ENCODE measurements at regions of chr5 and their contacts with region 1.

Region 1: DNA sequence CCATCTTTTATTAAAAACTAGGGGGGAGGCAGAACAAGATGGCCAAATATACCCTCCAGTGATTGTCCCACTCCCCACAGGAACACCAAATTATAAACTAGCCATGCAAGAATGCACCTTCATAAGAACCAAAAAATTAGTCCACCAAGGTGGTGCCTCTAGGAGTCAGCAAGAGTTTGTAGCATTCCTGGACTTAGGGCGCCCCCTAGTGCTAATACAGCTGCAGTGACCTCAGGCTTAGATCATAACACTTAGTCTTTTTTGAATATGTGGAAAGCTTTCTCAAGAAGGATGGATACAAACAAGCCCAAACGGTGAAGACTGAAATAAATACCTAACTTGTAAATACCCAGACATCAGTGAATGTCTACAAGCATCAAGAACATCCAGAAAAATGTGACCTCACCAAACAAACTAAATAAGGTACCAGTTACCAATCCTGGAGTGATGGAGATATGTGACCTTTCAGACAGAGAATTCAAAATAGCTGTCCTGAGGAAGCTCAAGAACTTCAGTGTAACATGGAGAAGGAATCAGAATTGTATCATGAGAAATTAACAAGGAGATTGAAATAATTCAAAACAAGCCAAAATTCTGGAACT is 19.3 kb downstream of the PPIP5K2 start:
- DNase-seq: peak; percentile 60 to 88 (median 83)
- ATAC-seq: peak; percentile 98
- H3K4me3 ChIP-seq: no peak overlapping the region
- H3K4me3 Mint-ChIP-seq: no peak overlapping the region
- H3K27ac ChIP-seq: no peak overlapping the region
- H3K27ac Mint-ChIP-seq: no peak overlapping the region
- H3K4me1 ChIP-seq: no peaks in the 10 kb centered on the region
- H3K4me1 Mint-ChIP-seq: peaks cover 2% of the 10 kb centered on the region
- H3K27me3 ChIP-seq: no peaks in the 10 kb centered on the region
- H3K27me3 Mint-ChIP-seq: no peaks in the 10 kb centered on the region
- CTCF ChIP-seq: peak; percentile 94

Region 2: DNA sequence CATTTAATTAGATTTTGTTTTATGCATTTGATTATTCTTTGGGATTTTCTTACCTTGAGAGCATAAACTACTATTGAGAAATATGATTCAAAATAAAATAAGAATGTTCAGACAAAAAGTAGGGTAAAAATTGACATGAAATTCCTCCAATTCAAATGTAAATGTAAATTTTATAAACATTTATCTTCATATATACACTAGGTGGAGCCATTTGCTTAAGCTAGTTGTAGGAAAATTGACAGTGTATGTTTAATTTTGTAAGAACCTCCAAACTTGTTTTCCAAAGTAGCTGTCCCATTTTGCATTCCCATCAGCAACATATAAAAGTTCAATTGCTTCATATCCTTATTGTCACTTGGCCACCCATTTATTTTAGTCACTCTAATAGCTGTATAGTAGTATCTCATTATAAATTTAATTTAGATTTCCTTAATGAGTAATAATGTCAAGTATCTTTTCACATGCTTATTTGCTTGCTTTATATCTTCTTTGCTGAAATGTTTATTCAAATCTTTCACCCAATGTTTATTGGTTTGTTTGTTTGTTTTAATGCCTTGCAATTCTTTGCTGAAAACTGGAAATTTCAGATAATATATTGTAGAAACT is 602.9 kb before region 1 on chr5:
- CTCF ChIA-PET with region 1: interaction called, 4 read pairs
- POLR2A ChIA-PET with region 1: no interaction called
- intact Hi-C with region 1: loop called (anchors 1 to 2 kb)
- DNase-seq: peak in 2 of 9 experiments; percentile 1 to 14
- ATAC-seq: no peak
- H3K4me3 ChIP-seq: no peak overlapping the region
- H3K4me3 Mint-ChIP-seq: no peak overlapping the region
- H3K27ac ChIP-seq: no peak overlapping the region
- H3K27ac Mint-ChIP-seq: no peak overlapping the region
- H3K4me1 ChIP-seq: no peaks in the 10 kb centered on the region
- H3K4me1 Mint-ChIP-seq: no peaks in the 10 kb centered on the region
- H3K27me3 ChIP-seq: no peaks in the 10 kb centered on the region
- H3K27me3 Mint-ChIP-seq: peaks cover 2% of the 10 kb centered on the region
- CTCF ChIP-seq: peak; percentile 28

Region 3: DNA sequence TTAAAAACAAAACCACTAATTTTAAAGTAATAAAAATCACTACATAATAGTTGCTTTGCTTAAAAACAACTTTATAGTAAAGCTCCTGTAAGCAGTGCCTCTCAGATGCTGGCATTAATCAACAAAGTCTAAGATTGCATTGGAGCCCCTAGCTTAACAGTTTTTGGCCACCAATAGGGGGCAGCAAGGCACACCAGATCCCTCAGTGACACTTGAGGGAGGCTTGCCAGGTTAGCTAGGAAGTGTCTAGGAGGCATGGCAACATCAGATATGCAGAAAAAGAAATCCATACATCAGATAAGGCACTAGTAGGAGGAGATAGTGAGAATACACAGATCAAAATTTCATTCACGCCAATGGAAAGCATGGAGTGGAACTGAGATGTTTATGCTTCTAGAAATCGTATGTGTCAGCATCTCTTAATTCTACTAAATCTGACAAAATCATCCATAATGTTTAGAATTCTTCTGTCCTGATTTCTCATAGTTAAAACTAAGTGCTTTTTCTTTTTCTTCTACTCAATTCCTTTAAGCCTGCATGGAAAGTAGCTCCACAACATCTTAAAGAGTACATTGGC is 457.9 kb before region 1 on chr5:
- CTCF ChIA-PET with region 1: interaction called, 24 read pairs
- POLR2A ChIA-PET with region 1: no interaction called
- intact Hi-C with region 1: loop called (anchors 1 to 2 kb)
- DNase-seq: peak; percentile 8 to 69 (median 47)
- ATAC-seq: no peak
- H3K4me3 ChIP-seq: no peak overlapping the region
- H3K4me3 Mint-ChIP-seq: no peak overlapping the region
- H3K27ac ChIP-seq: no peak overlapping the region
- H3K27ac Mint-ChIP-seq: no peak overlapping the region
- H3K4me1 ChIP-seq: no peaks in the 10 kb centered on the region
- H3K4me1 Mint-ChIP-seq: no peaks in the 10 kb centered on the region
- H3K27me3 ChIP-seq: no peaks in the 10 kb centered on the region
- H3K27me3 Mint-ChIP-seq: peaks cover 2% of the 10 kb centered on the region
- CTCF ChIP-seq: peak; percentile 55

Region 4: DNA sequence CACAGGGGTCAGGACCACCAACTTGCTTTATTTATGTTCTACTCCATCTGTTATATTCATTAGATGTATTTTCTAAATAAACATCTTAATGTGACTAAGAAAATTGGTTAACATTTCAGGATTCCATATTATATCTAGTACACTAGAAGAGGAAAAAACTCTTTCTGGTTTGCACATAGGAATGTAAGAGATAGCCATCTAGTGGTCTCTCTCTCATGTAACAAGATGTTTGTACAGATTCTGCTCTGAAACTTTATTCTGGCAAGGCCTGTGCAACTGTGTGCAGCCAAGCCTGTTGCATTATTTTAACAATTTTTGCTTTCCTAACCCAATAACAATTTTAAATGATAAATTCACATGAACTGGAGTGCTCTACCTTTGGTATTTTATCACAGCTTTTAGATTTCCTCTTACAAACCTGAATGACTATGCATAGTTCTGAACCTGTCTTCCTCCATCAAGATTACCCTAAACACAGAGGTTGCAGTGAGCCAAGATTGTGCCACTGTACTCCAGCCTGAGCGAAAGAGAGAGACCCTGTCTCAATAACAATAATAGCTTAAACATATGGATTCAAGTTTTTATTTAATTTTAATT is 167.6 kb before region 1 on chr5:
- CTCF ChIA-PET with region 1: interaction called, 8 read pairs
- POLR2A ChIA-PET with region 1: no interaction called
- intact Hi-C with region 1: loop called in 1 of 2 experiments (anchors 2 kb)
- DNase-seq: peak in 2 of 9 experiments; percentile 22 to 40
- ATAC-seq: no peak
- H3K4me3 ChIP-seq: no peak overlapping the region
- H3K4me3 Mint-ChIP-seq: no peak overlapping the region
- H3K27ac ChIP-seq: no peak overlapping the region
- H3K27ac Mint-ChIP-seq: no peak overlapping the region
- H3K4me1 ChIP-seq: no peaks in the 10 kb centered on the region
- H3K4me1 Mint-ChIP-seq: no peaks in the 10 kb centered on the region
- H3K27me3 ChIP-seq: no peaks in the 10 kb centered on the region
- H3K27me3 Mint-ChIP-seq: no peaks in the 10 kb centered on the region
- CTCF ChIP-seq: no peak

Region 5: GRCh38 chr5:103066326-103066725 is 73.0 kb before region 1 on chr5:
- CTCF ChIA-PET with region 1: interaction called, 14 read pairs
- POLR2A ChIA-PET with region 1: no interaction called
- intact Hi-C with region 1: loop called in 1 of 2 experiments (anchors 1 kb)
- DNase-seq: no peak
- ATAC-seq: no peak
- H3K4me3 ChIP-seq: no peak overlapping the region
- H3K4me3 Mint-ChIP-seq: no peak overlapping the region
- H3K27ac ChIP-seq: no peak overlapping the region
- H3K27ac Mint-ChIP-seq: no peak overlapping the region
- H3K4me1 ChIP-seq: no peaks in the 10 kb centered on the region
- H3K4me1 Mint-ChIP-seq: no peaks in the 10 kb centered on the region
- H3K27me3 ChIP-seq: no peaks in the 10 kb centered on the region
- H3K27me3 Mint-ChIP-seq: no peaks in the 10 kb centered on the region
- CTCF ChIP-seq: no peak

Region 6: GRCh38 chr5:103393101-103393754 is 253.9 kb after region 1 on chr5:
- CTCF ChIA-PET with region 1: no interaction called
- POLR2A ChIA-PET with region 1: no interaction called
- intact Hi-C with region 1: no loop called
- DNase-seq: no peak
- ATAC-seq: no peak
- H3K4me3 ChIP-seq: no peak overlapping the region
- H3K4me3 Mint-ChIP-seq: no peak overlapping the region
- H3K27ac ChIP-seq: no peak overlapping the region
- H3K27ac Mint-ChIP-seq: no peak overlapping the region
- H3K4me1 ChIP-seq: peaks cover 5% of the 10 kb centered on the region
- H3K4me1 Mint-ChIP-seq: peaks cover 5% of the 10 kb centered on the region
- H3K27me3 ChIP-seq: peaks cover 0 to 3% of the 10 kb centered on the region in 2 experiments
- H3K27me3 Mint-ChIP-seq: no peaks in the 10 kb centered on the region
- CTCF ChIP-seq: no peak

Region 7: GRCh38 chr5:103758996-103759395 is 619.6 kb after region 1 on chr5:
- CTCF ChIA-PET with region 1: no interaction called
- POLR2A ChIA-PET with region 1: no interaction called
- intact Hi-C with region 1: no loop called
- DNase-seq: no peak
- ATAC-seq: no peak
- H3K4me3 ChIP-seq: no peak overlapping the region
- H3K4me3 Mint-ChIP-seq: no peak overlapping the region
- H3K27ac ChIP-seq: no peak overlapping the region
- H3K27ac Mint-ChIP-seq: no peak overlapping the region
- H3K4me1 ChIP-seq: no peaks in the 10 kb centered on the region
- H3K4me1 Mint-ChIP-seq: no peaks in the 10 kb centered on the region
- H3K27me3 ChIP-seq: no peaks in the 10 kb centered on the region
- H3K27me3 Mint-ChIP-seq: no peaks in the 10 kb centered on the region
- CTCF ChIP-seq: no peak

Measured in CD8-positive, alpha-beta T cell (primary cell).